Left ventricle myocardium superior (tissue), 1 donor: ENCODE measurements at regions of chr15 and their contacts with region 1.

Region 1: DNA sequence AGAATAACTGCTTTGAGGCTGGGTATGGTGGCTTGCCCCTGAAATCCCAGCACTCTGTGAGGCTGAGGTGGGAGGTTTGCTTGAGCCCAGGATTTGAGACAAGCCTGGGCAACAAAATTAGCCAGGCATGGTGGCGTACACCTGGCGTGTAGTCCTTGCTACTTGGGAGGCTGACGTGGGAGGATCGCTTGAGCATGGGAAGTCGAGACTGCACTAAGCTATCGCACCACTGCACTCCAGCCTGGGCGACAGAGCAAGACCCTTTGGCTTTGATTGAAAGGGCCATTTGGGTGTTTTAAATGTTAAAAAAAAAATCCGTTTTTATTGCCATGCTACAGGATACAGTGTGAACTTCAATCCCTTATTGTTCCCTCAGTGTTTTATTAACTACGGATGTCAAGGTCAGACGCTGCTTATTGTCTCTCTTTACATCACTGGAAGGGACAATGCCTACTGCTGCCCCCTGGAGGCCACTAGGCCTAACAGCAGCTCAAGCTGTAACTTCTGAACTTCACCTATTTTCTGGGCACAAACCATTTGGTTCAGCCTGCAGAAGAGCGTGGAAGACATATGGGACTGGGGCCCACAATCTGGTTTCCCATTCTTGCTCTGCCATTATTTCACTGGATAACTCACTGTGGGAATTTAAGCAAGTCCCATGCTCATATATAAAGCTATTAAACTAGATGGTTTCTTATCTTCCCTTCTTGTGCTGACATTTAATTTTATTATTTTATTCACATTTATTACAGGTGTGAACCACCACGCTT is 15.3 kb upstream of the IREB2 start:
- DNase-seq: peak; percentile 74
- ATAC-seq: peak; percentile 71

Region 2: GRCh38 chr15:78308422-78309032 is 114.2 kb before region 1 on chr15:
- intact Hi-C with region 1: loop called (anchors 5 kb)
- DNase-seq: peak; percentile 74
- ATAC-seq: peak; percentile 88